K562 (cell line): ENCODE measurements at regions of chr6 and their contacts with region 1.

Region 1: GRCh38 chr6:35980991-35981660 is 43.3 kb downstream of the SLC26A8 start:
- DNase-seq: no peak
- ATAC-seq: no peak
- H3K4me3 ChIP-seq: no peak overlapping the region
- H3K27ac ChIP-seq: no peak overlapping the region
- H3K4me1 ChIP-seq: peaks cover 0 to 2% of the 10 kb centered on the region in 2 experiments; a peak in 1 of 5 replicates
- H3K27me3 ChIP-seq: peaks cover 18 to 27% of the 10 kb centered on the region in 2 experiments
- CTCF ChIP-seq: no peak
- EP300 ChIP-seq: no peak
- POLR2A ChIP-seq: no peak
- RAD21 ChIP-seq: no peak

Region 2: DNA sequence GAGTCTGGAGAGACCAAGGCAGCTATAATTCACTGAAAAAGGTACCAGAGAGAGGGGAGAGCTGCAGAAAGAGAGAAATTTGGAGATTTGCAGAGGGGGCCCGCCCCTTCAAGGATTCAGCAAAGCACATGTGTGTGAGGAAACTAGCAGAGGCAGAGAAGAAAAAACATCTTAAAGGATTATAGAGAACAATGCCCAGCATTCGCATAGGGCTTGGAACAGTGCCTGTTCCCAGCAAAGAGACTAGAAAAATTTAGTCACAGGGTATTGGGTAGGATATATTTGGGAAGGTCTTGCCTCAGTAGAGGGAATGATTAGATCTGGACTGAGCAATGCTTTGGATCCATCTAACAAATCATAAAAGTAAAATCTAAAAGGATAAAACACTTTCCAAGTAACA is 104.2 kb before region 1 on chr6:
- CTCF ChIA-PET with region 1: no interaction called
- POLR2A ChIA-PET with region 1: no interaction called
- in situ Hi-C with region 1: no loop called
- intact Hi-C with region 1: no loop called
- DNase-seq: no peak
- ATAC-seq: no peak
- H3K4me3 ChIP-seq: no peak overlapping the region
- H3K27ac ChIP-seq: no peak overlapping the region
- H3K4me1 ChIP-seq: no peaks in the 10 kb centered on the region
- H3K27me3 ChIP-seq: no peaks in the 10 kb centered on the region
- CTCF ChIP-seq: no peak
- EP300 ChIP-seq: no peak
- POLR2A ChIP-seq: no peak
- RAD21 ChIP-seq: no peak

Region 3: DNA sequence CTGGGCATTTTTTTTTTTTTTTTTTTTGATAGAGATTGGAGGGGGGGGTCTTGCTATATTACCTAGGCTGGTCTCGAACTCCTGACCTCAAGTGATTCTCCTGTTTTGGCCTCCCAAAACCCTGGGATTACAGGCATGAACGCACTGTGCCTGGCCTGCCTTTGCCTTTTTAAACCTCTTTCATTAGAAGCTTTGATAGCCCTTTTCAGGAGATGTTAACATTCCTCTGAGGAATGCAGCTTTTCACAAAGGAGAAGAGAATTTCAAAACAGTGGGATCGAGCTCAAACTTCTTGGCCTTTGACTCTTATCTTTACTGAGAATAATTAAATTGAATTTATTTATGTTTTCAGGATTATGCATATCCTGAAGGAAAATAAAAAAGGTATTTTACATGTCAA is 12.0 kb after region 1 on chr6:
- CTCF ChIA-PET with region 1: no interaction called
- POLR2A ChIA-PET with region 1: interaction called, 14 read pairs
- in situ Hi-C with region 1: no loop called
- intact Hi-C with region 1: no loop called
- DNase-seq: no peak
- ATAC-seq: no peak
- H3K4me3 ChIP-seq: no peak overlapping the region
- H3K27ac ChIP-seq: no peak overlapping the region
- H3K4me1 ChIP-seq: no peaks in the 10 kb centered on the region
- H3K27me3 ChIP-seq: peaks cover 20 to 38% of the 10 kb centered on the region in 2 experiments
- CTCF ChIP-seq: no peak
- EP300 ChIP-seq: no peak
- POLR2A ChIP-seq: no peak
- RAD21 ChIP-seq: no peak